ENCODE measurements at regions of chr9 and their contacts with region 1.

Region 1: DNA sequence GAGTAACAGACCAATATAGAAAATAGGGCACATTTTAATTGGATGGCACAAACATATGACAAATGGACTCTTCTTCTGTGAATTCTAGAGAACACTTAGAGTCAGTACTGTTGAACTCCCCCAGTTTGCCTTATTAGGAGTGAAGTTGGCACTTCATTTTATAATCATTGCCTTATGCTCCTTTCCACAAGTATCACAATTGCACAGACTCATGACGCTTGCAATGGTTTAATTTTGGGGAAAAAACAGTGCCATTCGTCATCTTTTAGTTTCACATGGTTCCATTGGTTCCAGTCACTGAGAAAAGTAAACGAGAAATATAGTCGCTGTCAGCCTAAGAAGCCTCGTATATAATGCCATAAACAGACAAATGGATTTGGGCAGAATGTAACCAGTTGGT is 71.2 kb downstream of the LURAP1L start:
- DNase-seq: no peak

Region 2: GRCh38 chr9:12904261-12905008 is 58.4 kb after region 1 on chr9:
- intact Hi-C with region 1: loop called in 1 of 2 experiments (anchors 2 kb)
- DNase-seq: no peak